WTC11 (cell line): ENCODE measurements at regions of chr20 and their contacts with region 1.

Region 1: DNA sequence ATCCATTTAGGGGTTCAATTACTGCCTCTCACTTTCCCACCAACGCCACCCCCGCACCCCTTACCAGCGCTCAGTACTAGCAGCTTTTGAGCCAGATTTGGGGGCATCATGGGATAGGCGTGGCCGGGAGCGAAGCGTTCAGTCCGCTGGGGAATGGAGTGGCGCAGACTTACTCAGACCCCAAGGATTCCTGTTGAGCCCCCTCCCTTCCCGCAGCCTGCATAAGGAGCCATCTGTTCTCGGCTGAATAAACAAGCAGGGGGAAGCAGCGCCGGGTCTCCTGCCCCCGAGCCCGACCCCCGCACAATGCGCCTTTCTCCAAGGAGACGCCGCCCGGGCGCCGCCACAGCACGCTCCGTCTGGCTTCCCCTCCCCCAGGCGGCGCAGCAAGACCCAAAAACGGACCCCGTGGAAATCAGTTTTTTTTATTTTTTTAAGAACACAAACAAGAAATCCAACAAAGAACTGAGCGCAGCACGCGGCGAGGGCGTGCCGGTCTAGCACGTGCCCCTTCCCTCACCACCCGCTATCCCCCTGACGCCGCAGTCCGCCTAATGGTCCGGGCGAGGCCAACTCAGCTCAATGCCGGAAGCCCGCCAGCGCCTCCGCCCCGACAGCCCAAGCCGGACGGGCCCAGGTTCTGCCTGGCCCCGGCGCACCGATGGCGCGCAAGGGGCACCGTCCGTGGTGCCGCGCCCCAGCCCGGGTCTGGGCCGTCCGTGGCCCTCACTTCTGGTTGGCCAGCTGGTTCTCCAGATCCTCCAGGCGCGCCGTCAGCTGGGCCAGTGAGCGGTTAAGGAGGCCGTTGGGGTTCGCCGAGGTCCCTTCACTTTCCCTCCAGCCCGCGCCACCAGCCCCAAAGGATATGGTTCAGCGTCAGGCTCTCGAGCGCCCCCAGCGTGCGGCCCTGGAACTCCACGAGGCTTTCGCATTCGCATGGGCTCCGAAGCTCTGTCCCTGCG is 13.3 kb upstream of the RBPJL start:
- DNase-seq: peak; percentile 95
- ATAC-seq: peak; percentile 87
- H3K4me3 Mint-ChIP-seq: peak overlapping the region; percentile 71
- H3K27ac Mint-ChIP-seq: no peak overlapping the region
- H3K4me1 Mint-ChIP-seq: peaks cover 7% of the 10 kb centered on the region; the same call in 1 of the 2 replicates
- H3K27me3 Mint-ChIP-seq: peaks cover 66% of the 10 kb centered on the region
- CTCF ChIP-seq: peak; percentile 95

Region 2: DNA sequence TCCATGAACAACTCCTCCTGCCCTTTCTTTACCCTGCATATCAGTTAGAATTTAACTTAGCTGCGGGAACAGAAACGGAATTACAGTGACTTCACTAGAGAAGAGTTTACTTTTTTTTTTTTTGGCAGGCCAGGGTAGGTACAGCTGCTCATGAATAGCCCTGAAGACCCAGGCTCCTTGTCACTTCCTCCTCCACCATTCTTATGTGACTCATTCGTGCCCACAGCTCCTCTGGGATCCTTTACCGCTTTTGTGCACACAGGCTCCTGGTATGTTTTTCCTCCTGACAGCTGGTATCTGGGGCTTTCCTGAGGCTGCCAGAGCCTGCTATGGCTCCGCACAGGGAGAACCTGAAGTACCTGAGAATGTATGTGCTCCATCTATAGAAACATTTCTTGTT is 188.5 kb before region 1 on chr20:
- CTCF ChIA-PET with region 1: interaction called, 22 read pairs
- POLR2A ChIA-PET with region 1: no interaction called
- DNase-seq: no peak
- ATAC-seq: no peak
- H3K4me3 Mint-ChIP-seq: no peak overlapping the region
- H3K27ac Mint-ChIP-seq: no peak overlapping the region
- H3K4me1 Mint-ChIP-seq: peaks cover 6% of the 10 kb centered on the region
- H3K27me3 Mint-ChIP-seq: peaks cover 27% of the 10 kb centered on the region
- CTCF ChIP-seq: no peak

Region 3: DNA sequence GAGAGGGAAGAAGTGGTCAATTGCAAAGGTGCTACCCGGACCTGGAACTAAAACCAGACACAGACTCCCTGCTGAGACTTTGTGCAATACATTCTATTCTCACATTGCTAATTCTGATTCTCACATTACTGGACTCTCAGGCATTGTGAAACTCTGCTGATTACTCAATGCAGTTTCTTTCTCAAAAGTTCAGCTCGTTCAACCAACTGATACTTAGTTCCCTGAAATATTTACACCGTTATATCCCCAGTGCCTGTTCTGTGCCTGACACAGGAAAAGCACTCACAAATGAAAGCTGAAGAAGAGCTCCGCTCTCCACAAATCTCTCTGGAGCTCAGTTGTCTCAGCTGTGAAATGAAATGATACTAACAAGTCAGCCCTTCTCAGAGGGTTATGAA is 38.5 kb before region 1 on chr20:
- CTCF ChIA-PET with region 1: interaction called, 15 read pairs
- POLR2A ChIA-PET with region 1: no interaction called
- DNase-seq: no peak
- ATAC-seq: no peak
- H3K4me3 Mint-ChIP-seq: no peak overlapping the region
- H3K27ac Mint-ChIP-seq: no peak overlapping the region
- H3K4me1 Mint-ChIP-seq: peaks cover 9% of the 10 kb centered on the region
- H3K27me3 Mint-ChIP-seq: peaks cover 3% of the 10 kb centered on the region; the same call in 1 of the 2 replicates
- CTCF ChIP-seq: no peak

Region 4: DNA sequence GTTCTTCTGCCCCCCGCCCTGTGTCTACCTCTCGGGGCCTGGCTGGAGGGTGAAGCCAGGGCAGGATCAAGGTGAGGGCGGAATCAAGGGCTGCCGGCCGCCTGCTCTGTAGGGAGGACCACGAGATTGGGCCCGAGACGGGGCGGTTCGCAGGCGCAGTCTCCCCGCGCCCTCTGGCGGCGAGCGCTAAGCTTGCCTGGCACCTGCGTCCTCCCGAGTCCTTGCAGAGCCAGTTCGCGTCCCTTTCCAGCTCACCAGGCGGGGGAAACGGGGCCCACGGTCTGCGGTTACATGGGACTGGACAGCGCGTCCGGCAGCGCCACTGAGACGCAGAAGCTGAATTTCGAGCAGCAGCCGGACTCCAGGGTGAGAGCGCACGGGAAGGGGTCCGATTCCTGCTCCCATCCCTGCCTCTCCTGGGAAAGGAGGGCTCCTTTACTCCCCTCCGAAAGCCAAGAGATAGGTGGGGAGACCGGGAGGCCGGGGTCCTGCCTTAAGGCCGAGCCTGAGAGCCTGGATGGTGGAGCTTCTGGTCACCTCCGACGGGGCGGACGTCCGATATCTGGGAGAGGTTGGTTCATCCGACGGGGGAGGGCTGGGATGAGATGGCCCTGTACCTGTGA is 18.4 kb after region 1 on chr20:
- CTCF ChIA-PET with region 1: interaction called, 61 read pairs
- POLR2A ChIA-PET with region 1: interaction called, 4 read pairs
- DNase-seq: peak; percentile 92
- ATAC-seq: peak; percentile 68
- H3K4me3 Mint-ChIP-seq: peak overlapping the region; percentile 63
- H3K27ac Mint-ChIP-seq: no peak overlapping the region
- H3K4me1 Mint-ChIP-seq: peaks cover 15% of the 10 kb centered on the region
- H3K27me3 Mint-ChIP-seq: peaks cover 33% of the 10 kb centered on the region
- CTCF ChIP-seq: peak; percentile 71

Region 5: GRCh38 chr20:45362804-45363610 is 69.7 kb after region 1 on chr20 and contains the start of gene SYS1:
- CTCF ChIA-PET with region 1: interaction called, 15 read pairs
- POLR2A ChIA-PET with region 1: interaction called, 6 read pairs
- DNase-seq: peak; percentile 99
- ATAC-seq: peak; percentile 89
- H3K4me3 Mint-ChIP-seq: peak within 1 kb of the TSS; percentile 97
- H3K27ac Mint-ChIP-seq: peak within 1 kb of the TSS; percentile 98
- H3K4me1 Mint-ChIP-seq: peaks cover 25% of the 10 kb centered on the region
- H3K27me3 Mint-ChIP-seq: no peaks in the 10 kb centered on the region
- CTCF ChIP-seq: peak; percentile 77
- total RNA-seq, gene SYS1: 15.4 to 20.1 TPM (median 16.4 TPM) in 3 replicates